Prostate gland (tissue), 2 donors: ENCODE measurements at regions of chr11 and their contacts with region 1.

Region 1: GRCh38 chr11:59857444-59858434 is 8.5 kb downstream of the TCN1 start:
- DNase-seq: no peak
- H3K4me3 ChIP-seq: no peak overlapping the region
- H3K27ac ChIP-seq: no peak overlapping the region
- H3K4me1 ChIP-seq: no peaks in the 10 kb centered on the region
- H3K27me3 ChIP-seq: no peaks in the 10 kb centered on the region
- CTCF ChIP-seq: no peak
- POLR2A ChIP-seq: no peak

Region 2: GRCh38 chr11:59802639-59803176 is 55.0 kb before region 1 on chr11:
- intact Hi-C with region 1: no loop called
- DNase-seq: peak; percentile 47
- H3K4me3 ChIP-seq: no peak overlapping the region
- H3K27ac ChIP-seq: no peak overlapping the region
- H3K4me1 ChIP-seq: no peaks in the 10 kb centered on the region
- H3K27me3 ChIP-seq: no peaks in the 10 kb centered on the region
- CTCF ChIP-seq: peak in 3 of 4 experiments; percentile 74 to 81 (median 80)
- POLR2A ChIP-seq: no peak

Region 3: DNA sequence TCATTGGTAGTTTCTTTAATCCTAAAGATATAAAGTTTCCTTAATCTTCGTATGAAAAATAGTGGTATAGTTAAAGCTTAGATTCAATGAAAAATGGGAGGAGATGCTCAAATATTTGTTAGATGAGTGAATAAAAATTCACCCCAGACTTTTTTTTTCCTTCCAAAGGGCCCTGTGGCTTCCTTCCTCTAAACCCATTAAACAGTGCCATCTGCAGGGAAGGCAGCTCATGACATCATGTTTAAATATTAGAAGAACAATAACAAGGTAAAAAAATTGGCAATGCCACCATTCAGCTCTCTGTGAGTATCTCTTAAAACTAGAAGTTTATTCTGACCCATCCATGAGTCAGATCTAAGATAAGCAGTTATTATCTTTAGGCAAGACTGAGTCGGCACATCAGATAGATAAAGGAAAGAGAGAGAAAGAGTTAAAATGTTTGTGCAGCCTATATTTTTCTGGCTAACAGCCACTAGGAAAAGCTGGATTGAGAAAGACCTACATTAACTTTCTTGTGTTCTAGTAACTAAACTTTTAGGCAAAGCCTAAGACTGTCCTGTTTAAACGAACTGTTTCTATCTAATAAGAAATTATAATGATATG is 61.3 kb after region 1 on chr11:
- intact Hi-C with region 1: loop called (anchors 10 kb)
- DNase-seq: no peak
- H3K4me3 ChIP-seq: no peak overlapping the region
- H3K27ac ChIP-seq: no peak overlapping the region
- H3K4me1 ChIP-seq: no peaks in the 10 kb centered on the region
- H3K27me3 ChIP-seq: no peaks in the 10 kb centered on the region
- CTCF ChIP-seq: peak in 3 of 4 experiments; percentile 27 to 45 (median 28)
- POLR2A ChIP-seq: no peak